ENCODE measurements at regions of chr2 and their contacts with region 1.

Region 1: GRCh38 chr2:240539906-240540305 is 17.9 kb downstream of the ANKMY1 start:
- DNase-seq: no peak
- H3K4me3 ChIP-seq: no peak overlapping the region
- CTCF ChIP-seq: no peak

Region 2: DNA sequence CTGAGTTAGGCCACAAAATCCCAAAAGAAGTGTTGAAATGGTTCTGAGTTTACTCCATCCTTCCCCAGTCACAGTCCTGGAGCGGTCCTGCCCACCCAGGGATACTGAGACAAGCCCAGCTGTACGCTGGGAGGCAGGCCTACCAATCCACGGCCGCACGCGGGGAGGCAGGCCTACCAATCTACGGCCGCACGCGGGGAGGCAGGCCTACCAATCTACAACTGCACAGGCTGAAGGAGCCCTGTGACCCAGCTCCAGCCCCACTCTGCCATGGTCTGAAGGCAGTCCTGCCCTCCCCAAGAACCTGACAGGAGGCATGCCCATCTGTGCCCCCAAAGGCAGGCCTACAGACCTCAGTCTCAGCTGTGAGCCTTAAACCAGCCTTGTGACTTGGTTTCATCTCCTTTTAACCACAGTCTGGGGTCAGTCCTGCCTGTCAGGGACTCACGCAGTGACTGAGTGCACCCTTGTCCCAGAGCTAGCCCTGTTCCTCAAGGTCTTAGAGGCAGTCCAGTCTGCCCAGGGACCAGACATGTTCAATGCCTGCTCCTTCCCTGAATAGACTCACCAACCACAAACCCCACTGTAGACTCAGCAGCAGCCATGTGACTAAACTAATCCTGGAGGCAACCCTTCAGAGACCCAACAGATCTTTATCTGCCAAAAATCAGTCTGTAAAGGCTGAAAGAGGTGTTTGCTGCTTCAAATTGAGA is 67.7 kb before region 1 on chr2:
- in situ Hi-C with region 1: loop called (anchors 5 kb)
- DNase-seq: no peak
- H3K4me3 ChIP-seq: no peak overlapping the region
- CTCF ChIP-seq: no peak